ENCODE measurements at regions of chr12 and their contacts with region 1.

Region 1: DNA sequence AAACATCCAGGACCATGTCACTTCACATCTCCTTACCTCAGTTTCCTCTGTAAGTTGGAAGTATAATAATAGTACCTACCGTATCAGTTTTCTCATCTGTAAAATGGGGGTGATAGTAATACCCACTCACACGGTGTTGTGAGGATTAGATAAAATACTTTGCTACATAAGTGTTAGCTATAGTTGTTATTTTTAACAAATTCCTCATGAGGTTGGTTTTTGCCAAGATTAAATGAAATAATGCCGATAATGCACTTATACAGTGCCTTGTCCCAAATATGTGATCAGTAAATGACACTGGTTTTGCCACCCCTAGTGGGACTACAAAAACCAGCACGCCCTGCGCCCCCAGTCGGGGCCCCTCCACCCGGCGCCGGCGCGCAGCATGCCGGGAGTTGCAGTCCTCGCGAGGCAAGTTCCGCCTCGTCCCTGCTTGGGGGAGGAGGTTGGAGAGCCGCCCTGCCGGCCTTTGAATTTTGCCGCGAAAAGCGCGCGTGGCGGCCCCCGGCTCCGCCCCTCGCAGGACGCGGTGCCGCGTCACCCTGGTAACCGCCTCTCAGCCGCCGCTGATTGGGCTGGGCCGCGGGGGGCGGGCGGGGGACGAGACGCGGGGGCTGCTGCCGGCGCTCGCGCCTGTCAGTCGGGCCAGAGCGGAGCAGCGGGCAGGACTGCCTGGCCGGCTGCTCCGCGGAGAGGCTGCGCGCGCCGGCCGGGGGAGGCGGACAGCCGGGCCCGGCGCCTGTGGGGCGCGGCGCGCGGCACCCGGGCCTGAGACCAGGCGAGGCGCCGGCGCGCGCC is at the start of gene FAM222A:
- DNase-seq: peak; percentile 93
- H3K4me3 Mint-ChIP-seq: peak within 1 kb of the TSS; percentile 55
- H3K27ac Mint-ChIP-seq: no peak within 1 kb of the TSS
- H3K4me1 Mint-ChIP-seq: peaks cover 2% of the 10 kb centered on the region
- H3K27me3 Mint-ChIP-seq: peaks cover 35% of the 10 kb centered on the region
- total RNA-seq, gene FAM222A: 0.20 to 0.38 TPM

Region 2: DNA sequence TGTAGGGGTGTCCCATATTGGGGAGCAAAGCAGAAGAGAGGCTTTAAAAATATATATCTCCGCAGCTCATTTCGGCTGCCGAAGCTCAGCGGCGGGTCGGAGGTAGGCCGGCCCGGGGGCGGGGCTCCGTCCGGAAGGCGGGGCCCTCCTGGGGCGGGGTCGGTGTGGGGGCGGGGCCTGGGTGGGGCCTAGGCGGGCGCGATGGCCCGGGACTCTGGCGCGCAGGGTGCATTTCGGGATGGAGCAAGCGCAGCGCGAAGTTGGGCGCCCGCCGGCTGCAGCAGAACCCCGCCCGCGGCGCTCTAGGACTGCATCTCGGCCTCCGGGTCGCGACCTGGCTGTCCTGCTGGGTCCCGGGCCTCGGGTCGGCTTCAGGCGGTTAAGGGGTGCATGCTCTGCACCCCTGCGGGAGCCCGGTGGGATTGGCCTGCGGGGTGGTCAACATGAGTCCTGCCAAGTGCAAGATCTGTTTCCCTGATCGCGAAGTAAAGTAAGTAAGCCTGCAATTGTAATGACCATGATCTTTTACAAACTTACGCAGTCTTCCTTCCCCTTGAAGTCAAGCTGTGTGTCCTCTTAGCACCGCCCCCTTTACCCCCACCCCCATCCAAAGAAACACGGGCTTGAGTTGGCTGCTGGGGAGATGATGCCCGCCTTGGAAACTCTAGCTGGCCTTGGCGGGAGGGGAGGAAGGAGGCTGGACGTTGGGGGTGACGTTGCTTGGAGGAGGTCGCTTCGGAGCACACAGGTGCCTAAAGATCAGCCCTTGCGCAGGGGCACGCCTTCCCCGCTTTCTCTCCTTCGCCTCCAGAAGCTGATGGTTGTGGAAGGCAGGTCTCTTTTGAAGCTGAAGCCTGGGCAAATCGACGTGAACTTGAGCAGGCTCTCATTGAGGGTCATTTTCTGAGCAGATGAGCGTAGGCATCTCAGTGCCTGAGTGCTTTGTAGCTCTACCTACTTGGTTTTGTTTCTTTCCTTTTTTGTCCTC is 558.6 kb before region 1 on chr12:
- CTCF ChIA-PET with region 1: no interaction called
- intact Hi-C with region 1: loop called (anchors 10 kb)
- DNase-seq: peak; percentile 85
- H3K4me3 Mint-ChIP-seq: peak overlapping the region; percentile 90
- H3K27ac Mint-ChIP-seq: peak overlapping the region; percentile 81
- H3K4me1 Mint-ChIP-seq: peaks cover 17% of the 10 kb centered on the region
- H3K27me3 Mint-ChIP-seq: no peaks in the 10 kb centered on the region

Region 3: GRCh38 chr12:109497675-109498074 is 215.7 kb before region 1 on chr12:
- CTCF ChIA-PET with region 1: no interaction called
- intact Hi-C with region 1: no loop called
- DNase-seq: no peak
- H3K4me3 Mint-ChIP-seq: no peak overlapping the region
- H3K27ac Mint-ChIP-seq: no peak overlapping the region
- H3K4me1 Mint-ChIP-seq: no peaks in the 10 kb centered on the region
- H3K27me3 Mint-ChIP-seq: no peaks in the 10 kb centered on the region

Region 4: DNA sequence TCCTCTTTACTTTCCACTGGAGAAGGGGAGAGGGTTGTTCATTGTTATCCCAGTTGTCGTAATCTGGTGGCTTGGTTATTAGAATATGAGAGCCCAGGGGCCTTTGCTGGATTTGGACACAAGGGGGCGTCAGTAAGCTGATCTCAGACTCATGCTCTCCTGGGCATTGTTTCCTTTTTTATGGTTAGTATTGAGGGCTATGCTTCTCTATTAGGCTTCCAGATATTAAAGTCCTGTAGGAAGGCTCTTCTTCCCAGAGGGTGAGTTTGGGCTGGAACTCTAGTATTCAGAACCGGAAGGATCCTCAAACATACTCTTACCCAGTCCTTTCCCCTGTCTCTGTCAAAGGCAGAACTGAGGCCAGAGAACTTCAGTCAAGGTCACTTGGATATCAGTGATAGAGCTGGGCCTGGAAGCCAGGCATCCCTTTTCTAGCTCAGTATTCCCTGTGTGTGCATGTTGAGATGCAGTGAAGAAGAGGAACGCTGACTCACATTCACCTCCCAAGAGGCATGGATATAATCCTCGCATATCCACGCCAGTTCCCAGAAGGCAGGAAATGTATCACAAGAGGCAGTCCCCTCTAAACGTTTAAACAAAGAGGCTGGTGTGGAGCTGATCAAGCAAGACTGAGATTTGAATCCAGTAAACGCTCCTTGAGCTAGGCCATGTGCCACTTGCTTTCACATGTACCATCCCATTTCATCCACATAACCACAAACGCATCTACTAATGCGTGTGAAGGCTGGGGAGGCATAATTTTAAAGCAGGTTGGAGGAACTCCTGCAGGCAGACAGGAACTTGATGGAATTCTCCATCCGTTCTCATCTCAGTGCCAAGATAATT is 194.3 kb before region 1 on chr12:
- CTCF ChIA-PET with region 1: interaction called, 4 read pairs
- intact Hi-C with region 1: loop called (anchors 5 kb)
- DNase-seq: peak; percentile 77
- H3K4me3 Mint-ChIP-seq: no peak overlapping the region
- H3K27ac Mint-ChIP-seq: no peak overlapping the region
- H3K4me1 Mint-ChIP-seq: no peaks in the 10 kb centered on the region
- H3K27me3 Mint-ChIP-seq: no peaks in the 10 kb centered on the region

Region 5: GRCh38 chr12:109775172-109775881 is 61.9 kb after region 1 on chr12:
- CTCF ChIA-PET with region 1: no interaction called
- intact Hi-C with region 1: loop called (anchors 2 kb)
- DNase-seq: peak; percentile 84
- H3K4me3 Mint-ChIP-seq: no peak overlapping the region
- H3K27ac Mint-ChIP-seq: no peak overlapping the region
- H3K4me1 Mint-ChIP-seq: peaks cover 9% of the 10 kb centered on the region
- H3K27me3 Mint-ChIP-seq: no peaks in the 10 kb centered on the region

Region 6: DNA sequence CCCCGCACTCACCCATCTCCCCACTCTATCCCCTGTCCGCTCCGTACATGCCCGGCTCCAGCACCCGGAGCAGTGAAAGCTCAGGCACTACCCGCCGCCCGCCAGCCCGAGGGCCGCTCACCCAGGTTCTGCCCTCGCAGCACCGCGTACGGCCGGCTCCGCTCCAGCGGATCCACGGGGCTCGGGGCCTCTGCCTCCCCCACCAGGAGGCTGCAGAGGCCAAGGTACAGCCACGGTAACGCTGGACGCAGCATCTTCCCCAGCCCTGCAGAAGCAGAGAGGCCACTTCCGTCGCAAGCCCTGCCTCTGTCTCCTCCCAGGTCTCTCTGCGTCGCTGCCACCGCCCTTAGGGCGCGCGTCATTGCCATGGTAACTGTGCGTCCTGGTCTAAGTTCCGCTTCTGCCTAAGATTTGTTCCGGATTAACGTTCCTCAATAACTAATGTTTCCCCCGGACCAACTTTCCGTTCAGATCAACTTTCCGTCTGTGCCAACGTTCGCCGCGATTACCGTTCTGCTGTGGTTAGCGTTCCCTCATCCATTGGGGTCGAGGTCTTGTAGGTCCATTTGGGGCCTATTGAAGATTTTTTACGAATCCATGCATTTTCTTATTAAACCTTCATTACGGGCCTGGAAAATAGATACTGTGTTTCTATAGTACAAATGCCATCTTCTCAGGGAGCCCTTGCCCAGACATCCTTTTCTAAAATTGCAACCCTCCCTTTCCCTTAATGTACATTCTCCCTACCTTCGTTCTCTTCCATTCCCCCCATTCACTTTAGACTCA is 335.0 kb after region 1 on chr12 and contains the start of gene C12orf76:
- CTCF ChIA-PET with region 1: no interaction called
- intact Hi-C with region 1: loop called (anchors 5 kb)
- DNase-seq: peak; percentile 96
- H3K4me3 Mint-ChIP-seq: peak within 1 kb of the TSS; percentile 83
- H3K27ac Mint-ChIP-seq: peak within 1 kb of the TSS; percentile 87
- H3K4me1 Mint-ChIP-seq: peaks cover 28% of the 10 kb centered on the region
- H3K27me3 Mint-ChIP-seq: no peaks in the 10 kb centered on the region
- total RNA-seq, gene C12orf76: 12.1 to 12.9 TPM

Measured in activated naive CD4-positive, alpha-beta T cell treated with anti-CD3 and anti-CD28 coated beads for 36 hours (primary cell).